Prostate gland (tissue), 2 donors: ENCODE measurements at regions of chr5 and their contacts with region 1.

Region 1: GRCh38 chr5:137254119-137255090 is 244.7 kb downstream of the SPOCK1 start:
- DNase-seq: peak; percentile 15
- H3K4me3 ChIP-seq: no peak overlapping the region
- H3K27ac ChIP-seq: peak overlapping the region; percentile 50 to 59
- H3K4me1 ChIP-seq: no peaks in the 10 kb centered on the region
- H3K27me3 ChIP-seq: no peaks in the 10 kb centered on the region
- CTCF ChIP-seq: no peak
- POLR2A ChIP-seq: no peak

Region 2: GRCh38 chr5:137320056-137321045 is 65.9 kb after region 1 on chr5:
- intact Hi-C with region 1: loop called (anchors 5 kb)
- DNase-seq: peak; percentile 49
- H3K4me3 ChIP-seq: no peak overlapping the region
- H3K27ac ChIP-seq: no peak overlapping the region
- H3K4me1 ChIP-seq: peaks cover 3% of the 10 kb centered on the region
- H3K27me3 ChIP-seq: no peaks in the 10 kb centered on the region
- CTCF ChIP-seq: peak; percentile 67 to 88 (median 84)
- POLR2A ChIP-seq: no peak